ENCODE measurements at regions of chr6 and their contacts with region 1.

Region 1: DNA sequence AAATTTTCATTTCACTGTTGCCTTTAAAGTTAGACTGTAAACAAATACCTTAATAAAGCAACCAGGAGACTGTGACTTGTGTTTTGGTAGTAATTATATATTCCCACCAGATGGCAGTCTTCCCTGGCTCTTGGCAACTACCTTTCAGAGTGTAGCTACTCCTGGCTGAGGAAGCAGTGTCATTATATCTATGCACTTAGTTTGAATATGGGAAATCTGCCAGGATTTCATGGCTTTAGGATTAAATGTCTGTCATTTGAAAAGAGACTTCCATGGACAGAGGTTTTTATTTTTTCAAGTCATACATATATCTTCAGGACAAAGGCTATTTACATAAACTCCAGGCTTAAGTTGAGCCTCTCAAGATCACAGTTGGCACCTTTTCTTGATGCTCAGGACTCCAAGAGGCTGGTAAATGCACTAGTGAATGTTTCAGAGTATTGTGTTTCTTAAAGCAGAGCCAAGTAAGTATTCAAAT is 160.1 kb downstream of the C6orf58 start:
- DNase-seq: peak; percentile 47
- ATAC-seq: peak; percentile 95
- H3K4me3 ChIP-seq: no peak overlapping the region
- H3K27ac ChIP-seq: no peak overlapping the region
- H3K4me1 ChIP-seq: no peaks in the 10 kb centered on the region
- H3K27me3 ChIP-seq: no peaks in the 10 kb centered on the region
- CTCF ChIP-seq: peak; percentile 71; the same call in 1 of the 2 replicates

Region 2: DNA sequence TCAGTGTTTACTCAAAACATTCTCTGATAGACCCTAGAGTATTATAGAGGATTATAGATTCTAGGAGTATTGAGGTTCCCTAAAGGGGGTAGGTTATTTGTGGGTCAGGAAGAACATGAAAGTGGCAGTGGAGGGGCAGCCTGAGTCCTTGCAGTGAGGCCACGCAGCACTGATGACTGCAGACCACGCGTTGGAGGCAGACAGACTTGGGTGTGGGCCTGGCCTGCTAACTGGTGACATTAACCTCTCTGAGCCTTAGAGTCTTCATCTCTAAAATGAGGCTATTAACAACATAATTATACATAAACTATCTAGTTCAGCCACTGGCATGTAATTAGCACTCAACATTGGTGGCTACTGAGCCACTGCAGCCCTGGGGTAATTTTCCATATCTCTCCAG is 234.0 kb before region 1 on chr6:
- CTCF ChIA-PET with region 1: no interaction called
- POLR2A ChIA-PET with region 1: no interaction called
- in situ Hi-C with region 1: no loop called
- intact Hi-C with region 1: no loop called
- DNase-seq: no peak
- ATAC-seq: no peak
- H3K4me3 ChIP-seq: no peak overlapping the region
- H3K27ac ChIP-seq: no peak overlapping the region
- H3K4me1 ChIP-seq: no peaks in the 10 kb centered on the region
- H3K27me3 ChIP-seq: no peaks in the 10 kb centered on the region
- CTCF ChIP-seq: no peak

Region 3: DNA sequence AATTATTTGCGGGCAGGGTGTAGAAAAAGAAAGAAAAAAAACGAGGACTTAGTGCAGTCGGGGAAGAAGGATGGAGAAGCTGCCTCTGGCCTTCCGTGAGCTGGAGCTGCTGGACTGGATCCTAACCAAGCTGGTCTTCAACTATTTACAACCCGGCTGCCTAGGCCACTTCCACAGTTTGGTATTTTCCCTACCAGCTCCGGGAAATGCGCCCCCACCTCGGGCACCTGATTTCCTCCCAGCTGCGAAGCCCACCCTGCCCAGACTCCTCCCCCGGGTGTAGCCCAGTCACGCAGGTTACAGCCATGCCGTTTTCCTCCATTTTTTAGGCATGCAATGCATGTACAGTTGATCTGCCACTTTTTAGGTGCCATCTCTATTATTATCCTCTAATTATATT is 142.6 kb after region 1 on chr6:
- CTCF ChIA-PET with region 1: no interaction called
- POLR2A ChIA-PET with region 1: no interaction called
- in situ Hi-C with region 1: no loop called
- intact Hi-C with region 1: no loop called
- DNase-seq: no peak
- ATAC-seq: no peak
- H3K4me3 ChIP-seq: no peak overlapping the region
- H3K27ac ChIP-seq: no peak overlapping the region
- H3K4me1 ChIP-seq: no peaks in the 10 kb centered on the region
- H3K27me3 ChIP-seq: no peaks in the 10 kb centered on the region
- CTCF ChIP-seq: no peak

Region 4: DNA sequence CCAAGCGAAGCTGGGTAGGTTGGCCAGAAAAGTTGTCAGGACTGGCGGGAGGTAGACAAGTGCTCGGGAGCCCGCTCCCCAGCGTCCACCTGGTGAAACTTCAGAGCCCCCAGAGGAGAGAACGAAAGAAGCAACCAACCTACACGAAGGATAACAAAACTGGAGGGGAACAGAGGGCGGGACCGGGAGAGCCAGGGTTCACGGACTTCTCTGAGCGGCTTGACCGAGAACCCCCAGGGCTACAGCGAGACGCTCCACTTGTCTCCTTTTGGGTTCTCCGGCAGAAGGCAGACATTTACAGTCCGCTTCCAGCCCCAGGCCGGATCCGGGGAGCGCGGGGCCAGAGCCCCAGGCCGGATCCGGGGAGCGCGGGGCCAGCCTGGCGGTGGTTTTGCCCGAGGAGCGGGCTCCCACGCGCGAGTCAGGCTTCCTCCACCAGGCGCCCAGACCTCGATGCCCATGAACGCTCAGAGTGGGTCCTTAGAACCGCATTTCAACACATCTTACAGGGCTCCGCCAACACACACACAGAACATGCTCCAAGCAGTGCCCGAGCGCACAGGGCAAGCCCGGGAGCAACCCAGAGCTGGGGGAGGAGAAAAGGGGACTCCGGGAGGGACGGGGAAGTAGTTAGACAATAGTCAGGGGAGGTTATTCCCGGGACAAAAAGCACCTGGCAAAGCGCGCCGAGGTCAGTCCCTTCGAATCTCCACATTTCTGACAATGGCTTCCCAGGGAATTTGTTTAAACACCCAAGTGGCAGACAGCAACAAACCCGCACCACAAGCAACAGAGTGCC is 782.3 kb after region 1 on chr6:
- CTCF ChIA-PET with region 1: no interaction called
- POLR2A ChIA-PET with region 1: no interaction called
- in situ Hi-C with region 1: no loop called
- intact Hi-C with region 1: loop called (anchors 10 kb)
- DNase-seq: no peak
- ATAC-seq: peak; percentile 59
- H3K4me3 ChIP-seq: peak overlapping the region; percentile 84 to 95
- H3K27ac ChIP-seq: peak overlapping the region; percentile 92
- H3K4me1 ChIP-seq: peaks cover 40% of the 10 kb centered on the region
- H3K27me3 ChIP-seq: no peaks in the 10 kb centered on the region
- CTCF ChIP-seq: peak; percentile 52

Region 5: GRCh38 chr6:128704601-128705000 is 967.6 kb after region 1 on chr6:
- CTCF ChIA-PET with region 1: no interaction called
- POLR2A ChIA-PET with region 1: no interaction called
- in situ Hi-C with region 1: no loop called
- intact Hi-C with region 1: no loop called
- DNase-seq: no peak
- ATAC-seq: no peak
- H3K4me3 ChIP-seq: no peak overlapping the region
- H3K27ac ChIP-seq: no peak overlapping the region
- H3K4me1 ChIP-seq: no peaks in the 10 kb centered on the region
- H3K27me3 ChIP-seq: no peaks in the 10 kb centered on the region
- CTCF ChIP-seq: no peak

Region 6: DNA sequence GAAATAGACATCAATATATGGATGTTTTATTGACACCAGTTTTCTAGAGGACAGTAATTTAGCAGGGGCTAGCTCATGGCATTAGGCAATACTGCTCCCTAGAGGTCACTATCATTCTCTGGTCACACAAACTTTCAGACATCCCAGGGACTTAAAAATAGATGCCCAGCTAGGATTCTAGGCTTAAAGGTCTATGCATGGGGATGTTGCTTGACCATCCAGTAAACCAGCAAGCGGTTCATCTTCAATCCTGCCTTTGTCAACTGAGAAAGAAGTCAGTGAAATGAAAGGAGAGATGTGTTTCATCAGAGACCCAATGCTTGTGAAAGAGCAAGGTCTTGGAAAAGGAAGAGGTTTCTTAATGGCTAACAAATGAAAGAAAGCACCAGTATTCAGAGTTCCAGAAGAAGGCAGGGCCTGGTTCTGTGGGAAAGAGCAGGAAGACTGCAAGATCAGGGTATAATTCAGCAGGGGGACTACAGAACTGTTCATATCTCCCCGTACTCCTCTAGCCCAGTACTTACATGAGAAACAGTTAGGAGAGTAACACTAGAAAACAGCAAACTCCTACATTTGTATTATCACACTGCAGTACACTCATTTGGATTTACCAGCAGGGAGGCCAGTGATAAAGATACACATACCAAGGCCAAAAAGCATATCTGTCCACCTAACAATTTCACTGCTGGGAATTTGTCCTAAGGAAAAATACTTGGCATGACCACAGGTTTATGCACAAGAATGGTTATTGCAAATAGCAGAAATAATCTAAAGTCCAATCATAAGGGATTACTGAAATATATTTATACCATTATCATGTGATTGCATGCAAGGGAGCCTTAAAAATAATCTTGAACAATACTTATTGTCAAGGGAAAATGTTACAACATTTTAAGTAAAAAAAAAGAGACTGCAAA is 994.5 kb after region 1 on chr6:
- CTCF ChIA-PET with region 1: no interaction called
- POLR2A ChIA-PET with region 1: no interaction called
- in situ Hi-C with region 1: no loop called
- intact Hi-C with region 1: loop called (anchors 2 kb)
- DNase-seq: peak; percentile 20
- ATAC-seq: peak; percentile 79
- H3K4me3 ChIP-seq: no peak overlapping the region
- H3K27ac ChIP-seq: no peak overlapping the region
- H3K4me1 ChIP-seq: no peaks in the 10 kb centered on the region
- H3K27me3 ChIP-seq: no peaks in the 10 kb centered on the region
- CTCF ChIP-seq: peak; percentile 80